Mucosa of descending colon (tissue), 3 donors: ENCODE measurements at regions of chr6 and their contacts with region 1.

Region 1: DNA sequence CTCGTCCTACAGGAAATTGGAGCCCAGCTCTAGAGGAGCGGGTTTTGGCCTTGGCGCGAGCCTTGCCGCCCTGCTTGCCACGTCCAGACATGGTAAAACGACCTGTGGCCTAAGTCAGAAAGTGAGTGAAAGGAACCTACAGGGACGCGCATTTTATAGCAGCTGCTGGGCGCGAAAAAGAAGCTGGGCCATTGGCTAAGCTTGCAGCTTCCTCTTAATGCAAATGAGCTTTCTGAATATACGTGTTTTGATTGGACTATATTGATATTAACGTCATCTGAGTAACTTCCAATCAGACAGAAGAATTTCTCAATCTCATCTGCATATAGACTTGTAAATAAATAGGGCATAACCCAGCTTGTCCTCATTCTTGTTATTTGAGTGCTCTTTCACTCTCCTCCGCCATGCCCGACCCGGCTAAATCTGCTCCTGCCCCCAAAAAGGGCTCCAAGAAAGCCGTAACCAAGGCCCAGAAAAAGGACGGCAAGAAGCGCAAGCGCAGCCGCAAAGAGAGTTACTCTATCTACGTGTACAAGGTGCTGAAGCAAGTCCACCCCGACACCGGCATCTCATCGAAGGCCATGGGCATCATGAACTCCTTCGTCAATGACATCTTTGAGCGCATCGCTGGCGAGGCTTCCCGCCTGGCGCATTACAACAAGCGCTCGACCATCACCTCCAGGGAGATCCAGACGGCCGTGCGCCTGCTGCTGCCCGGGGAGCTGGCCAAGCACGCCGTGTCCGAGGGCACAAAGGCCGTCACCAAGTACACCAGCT is 18.9 kb downstream of the OR2B2 start:
- DNase-seq: peak; percentile 90 to 93 (median 93)
- ATAC-seq: peak; percentile 82
- H3K4me3 ChIP-seq: peak overlapping the region; percentile 13
- H3K4me1 ChIP-seq: peaks cover 11% of the 10 kb centered on the region
- CTCF ChIP-seq: no peak

Region 2: GRCh38 chr6:27177485-27178406 is 715.5 kb before region 1 on chr6:
- intact Hi-C with region 1: loop called in 1 of 2 experiments (anchors 10 kb)
- DNase-seq: peak; percentile 85 to 89 (median 86)
- ATAC-seq: peak; percentile 93
- H3K4me3 ChIP-seq: peak overlapping the region; percentile 76
- H3K4me1 ChIP-seq: no peaks in the 10 kb centered on the region
- CTCF ChIP-seq: peak; percentile 36

Region 3: GRCh38 chr6:27772261-27773001 is 120.8 kb before region 1 on chr6:
- intact Hi-C with region 1: loop called in 1 of 2 experiments (anchors 10 kb)
- DNase-seq: peak; percentile 92 to 95 (median 93)
- ATAC-seq: peak; percentile 89
- H3K4me3 ChIP-seq: no peak overlapping the region
- H3K4me1 ChIP-seq: peaks cover 15% of the 10 kb centered on the region
- CTCF ChIP-seq: peak; percentile 91

Region 4: DNA sequence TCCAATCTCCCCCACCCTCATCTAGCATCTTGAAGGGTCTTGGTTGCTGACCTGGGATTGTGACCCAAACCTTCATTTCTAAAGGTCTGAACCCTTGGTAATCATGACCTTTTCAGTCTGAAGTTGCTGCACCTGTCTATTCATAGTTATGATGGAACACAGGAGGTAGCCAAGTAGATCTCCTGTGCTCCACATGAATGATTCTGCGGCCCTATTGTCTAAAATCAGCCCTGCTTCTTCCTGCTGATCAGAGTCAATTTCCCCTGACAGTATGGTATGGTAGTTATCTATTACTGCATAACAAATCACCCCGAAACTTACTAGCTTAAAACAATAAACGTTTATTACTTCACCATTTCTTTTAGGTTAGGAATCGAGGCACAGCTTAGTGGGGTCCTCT is 72.8 kb after region 1 on chr6:
- intact Hi-C with region 1: no loop called
- DNase-seq: no peak
- ATAC-seq: no peak
- H3K4me3 ChIP-seq: no peak overlapping the region
- H3K4me1 ChIP-seq: no peaks in the 10 kb centered on the region
- CTCF ChIP-seq: no peak